ENCODE measurements at regions of chr7 and their contacts with region 1.

Region 1: DNA sequence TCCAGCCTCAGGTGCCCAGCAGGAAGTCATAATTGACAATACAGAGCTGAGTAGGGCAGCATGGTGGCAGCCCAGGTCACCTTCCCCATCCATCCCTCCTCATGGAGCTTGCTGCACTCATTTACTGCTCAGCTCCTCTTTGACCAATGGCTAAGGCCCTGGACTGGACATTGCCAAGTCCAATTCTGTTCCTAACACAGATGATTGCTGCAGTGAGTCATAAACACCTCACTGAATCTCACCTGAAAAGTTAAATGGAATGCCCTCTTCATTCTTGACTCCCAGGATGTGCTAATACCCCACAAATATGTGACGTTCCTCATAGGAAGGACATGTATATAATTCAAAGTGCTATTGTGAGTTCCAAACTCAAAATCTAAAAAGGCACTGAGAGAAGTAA is 73.5 kb upstream of the DLX6 start:
- DNase-seq: no peak
- H3K4me3 ChIP-seq: no peak overlapping the region
- H3K27ac ChIP-seq: no peak overlapping the region
- H3K4me1 ChIP-seq: no peaks in the 10 kb centered on the region
- H3K27me3 ChIP-seq: no peaks in the 10 kb centered on the region
- CTCF ChIP-seq: no peak
- EP300 ChIP-seq: no peak
- POLR2A ChIP-seq: no peak

Region 2: GRCh38 chr7:96337519-96337918 is 594.3 kb before region 1 on chr7:
- in situ Hi-C with region 1: no loop called
- intact Hi-C with region 1: no loop called
- DNase-seq: no peak
- H3K4me3 ChIP-seq: no peak overlapping the region
- H3K27ac ChIP-seq: no peak overlapping the region
- H3K4me1 ChIP-seq: no peaks in the 10 kb centered on the region
- H3K27me3 ChIP-seq: no peaks in the 10 kb centered on the region
- CTCF ChIP-seq: no peak
- EP300 ChIP-seq: no peak
- POLR2A ChIP-seq: no peak

Region 3: DNA sequence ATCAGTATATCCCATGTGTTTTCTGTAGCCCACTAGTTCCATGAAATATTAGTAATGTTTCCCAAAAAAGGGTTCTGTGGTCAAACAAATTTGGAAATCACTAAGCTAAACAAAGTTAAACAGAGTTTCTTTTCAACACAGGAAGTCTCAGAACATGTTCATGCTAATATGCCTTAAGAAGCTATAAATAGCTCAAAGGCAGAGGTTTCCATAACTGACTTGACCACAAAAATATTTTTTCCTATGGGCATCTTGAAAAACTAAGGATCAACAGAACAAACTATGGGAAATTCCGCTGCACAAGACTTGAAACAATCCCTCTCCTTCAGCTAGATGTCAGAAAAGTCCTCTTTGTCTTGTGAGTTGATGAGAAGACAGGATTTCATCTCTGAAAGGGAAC is 281.8 kb before region 1 on chr7:
- in situ Hi-C with region 1: no loop called
- intact Hi-C with region 1: no loop called
- DNase-seq: no peak
- H3K4me3 ChIP-seq: no peak overlapping the region
- H3K27ac ChIP-seq: no peak overlapping the region
- H3K4me1 ChIP-seq: no peaks in the 10 kb centered on the region
- H3K27me3 ChIP-seq: no peaks in the 10 kb centered on the region
- CTCF ChIP-seq: no peak
- EP300 ChIP-seq: no peak
- POLR2A ChIP-seq: no peak

Region 4: GRCh38 chr7:96901822-96902445 is 29.9 kb before region 1 on chr7:
- in situ Hi-C with region 1: no loop called
- intact Hi-C with region 1: loop called (anchors 1 kb)
- DNase-seq: no peak
- H3K4me3 ChIP-seq: no peak overlapping the region
- H3K27ac ChIP-seq: no peak overlapping the region
- H3K4me1 ChIP-seq: no peaks in the 10 kb centered on the region
- H3K27me3 ChIP-seq: no peaks in the 10 kb centered on the region
- CTCF ChIP-seq: no peak
- EP300 ChIP-seq: no peak
- POLR2A ChIP-seq: no peak

Region 5: GRCh38 chr7:96982586-96982985 is 50.8 kb after region 1 on chr7:
- in situ Hi-C with region 1: no loop called
- intact Hi-C with region 1: no loop called
- DNase-seq: no peak
- H3K4me3 ChIP-seq: no peak overlapping the region
- H3K27ac ChIP-seq: no peak overlapping the region
- H3K4me1 ChIP-seq: no peaks in the 10 kb centered on the region
- H3K27me3 ChIP-seq: peaks cover 30% of the 10 kb centered on the region
- CTCF ChIP-seq: no peak
- EP300 ChIP-seq: no peak
- POLR2A ChIP-seq: no peak

Measured in transverse colon (tissue), 4 donors.